Activated CD8-positive, alpha-beta T cell treated with anti-CD3 and anti-CD28 coated beads for 36 hours (primary cell): ENCODE measurements at regions of chr7 and their contacts with region 1.

Region 1: DNA sequence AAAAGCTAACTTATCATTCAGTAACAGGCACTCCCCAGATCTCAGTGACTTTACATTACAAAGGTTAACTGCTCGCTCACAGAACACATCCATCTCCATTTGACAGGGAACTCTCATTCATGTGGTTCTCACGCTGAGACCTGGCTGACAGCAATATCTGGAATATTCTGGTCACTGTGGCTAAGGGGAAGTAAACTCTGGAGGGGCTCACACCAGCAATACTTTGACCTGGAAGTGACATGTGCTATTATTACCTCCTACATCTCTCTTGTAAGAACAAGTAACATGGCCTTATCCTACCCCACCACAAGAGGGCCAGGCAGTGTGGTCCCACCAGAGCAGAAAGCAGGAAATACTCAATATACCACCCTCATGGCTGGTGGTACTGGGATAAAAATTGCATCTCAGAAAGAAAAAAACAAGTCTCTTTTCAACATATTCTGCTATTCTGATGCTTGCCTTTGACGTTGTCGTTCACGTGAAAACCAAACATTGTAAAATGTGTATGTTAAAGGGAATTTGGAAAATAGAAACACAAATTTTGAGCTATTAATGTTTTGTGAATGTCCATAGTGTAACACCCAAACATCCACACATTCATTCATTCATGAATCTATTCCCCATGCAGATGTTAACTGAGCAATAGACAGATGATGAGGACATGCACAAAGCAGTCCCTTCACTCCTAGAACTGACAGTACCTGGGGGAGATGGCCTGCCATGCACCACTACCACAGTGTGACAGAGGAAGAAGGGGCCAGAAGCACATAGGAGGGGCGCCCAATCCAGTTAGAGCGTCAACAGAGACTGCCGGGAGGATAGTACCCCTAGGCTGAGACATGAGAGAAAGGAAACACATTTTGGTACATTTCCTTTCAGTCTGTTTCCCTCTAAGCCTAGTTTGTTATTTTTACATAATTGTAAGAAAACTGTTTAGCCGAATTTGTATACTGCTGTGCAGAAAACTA is 166.0 kb upstream of the SP4 start:
- DNase-seq: peak; percentile 80
- ATAC-seq: peak; percentile 97
- H3K4me3 Mint-ChIP-seq: no peak overlapping the region
- H3K27ac Mint-ChIP-seq: peak overlapping the region; percentile 52
- H3K4me1 Mint-ChIP-seq: peaks cover 16% of the 10 kb centered on the region
- H3K27me3 Mint-ChIP-seq: peaks cover 3% of the 10 kb centered on the region
- CTCF ChIP-seq: peak; percentile 70

Region 2: GRCh38 chr7:21192657-21193056 is 69.3 kb before region 1 on chr7:
- CTCF ChIA-PET with region 1: no interaction called
- POLR2A ChIA-PET with region 1: no interaction called
- intact Hi-C with region 1: no loop called
- DNase-seq: no peak
- ATAC-seq: no peak
- H3K4me3 Mint-ChIP-seq: no peak overlapping the region
- H3K27ac Mint-ChIP-seq: no peak overlapping the region
- H3K4me1 Mint-ChIP-seq: peaks cover 4% of the 10 kb centered on the region
- H3K27me3 Mint-ChIP-seq: no peaks in the 10 kb centered on the region
- CTCF ChIP-seq: no peak

Region 3: GRCh38 chr7:21276471-21277035 is 14.6 kb after region 1 on chr7:
- CTCF ChIA-PET with region 1: interaction called, 16 read pairs
- POLR2A ChIA-PET with region 1: interaction called, 3 read pairs
- intact Hi-C with region 1: no loop called
- DNase-seq: no peak
- ATAC-seq: no peak
- H3K4me3 Mint-ChIP-seq: no peak overlapping the region
- H3K27ac Mint-ChIP-seq: no peak overlapping the region
- H3K4me1 Mint-ChIP-seq: peaks cover 5% of the 10 kb centered on the region
- H3K27me3 Mint-ChIP-seq: no peaks in the 10 kb centered on the region
- CTCF ChIP-seq: no peak

Region 4: GRCh38 chr7:21338728-21339164 is 76.8 kb after region 1 on chr7:
- CTCF ChIA-PET with region 1: no interaction called
- POLR2A ChIA-PET with region 1: no interaction called
- intact Hi-C with region 1: no loop called
- DNase-seq: peak; percentile 86
- ATAC-seq: peak; percentile 93
- H3K4me3 Mint-ChIP-seq: peak overlapping the region; percentile 22
- H3K27ac Mint-ChIP-seq: peak overlapping the region; percentile 95
- H3K4me1 Mint-ChIP-seq: peaks cover 47% of the 10 kb centered on the region
- H3K27me3 Mint-ChIP-seq: no peaks in the 10 kb centered on the region
- CTCF ChIP-seq: no peak

Region 5: DNA sequence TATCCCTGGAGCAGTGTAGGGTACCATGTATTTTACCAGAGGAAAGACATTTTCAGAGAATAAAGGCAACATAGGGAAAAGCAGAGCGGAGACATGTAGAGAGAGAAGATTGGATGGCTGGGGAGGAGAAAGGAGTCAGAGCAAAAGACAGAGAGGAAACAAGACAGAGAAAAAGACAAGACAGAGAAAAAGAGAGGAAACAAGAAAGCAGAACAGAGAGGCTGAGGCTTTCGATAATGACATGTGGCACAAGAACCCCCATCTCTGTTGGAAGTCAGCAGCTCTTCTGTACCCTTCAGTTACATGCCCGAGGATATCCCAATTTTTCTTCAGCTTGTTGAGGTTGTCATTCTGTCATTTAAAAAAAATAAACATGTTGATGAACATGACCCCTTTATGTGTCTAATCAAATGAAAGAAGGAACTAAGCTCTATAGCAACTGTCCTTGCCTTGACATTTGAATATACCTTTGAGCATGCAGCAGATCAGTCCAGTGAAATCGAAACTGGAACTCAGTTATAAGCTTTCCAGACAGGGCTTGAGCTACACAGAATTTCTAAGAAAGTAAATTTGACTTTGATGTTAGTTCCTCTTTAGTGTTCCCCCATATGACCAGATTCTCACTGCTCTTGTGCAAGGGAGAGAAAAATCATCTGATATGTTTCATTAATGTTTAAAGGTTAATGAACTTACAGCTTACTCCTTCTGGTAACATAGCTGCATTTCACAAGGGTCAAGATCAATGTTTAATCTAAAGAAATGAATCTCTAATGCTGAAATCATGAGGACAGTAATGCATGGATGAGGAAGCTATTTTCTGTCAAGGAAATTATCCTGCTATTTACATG is 90.9 kb after region 1 on chr7:
- CTCF ChIA-PET with region 1: interaction called, 4 read pairs
- POLR2A ChIA-PET with region 1: no interaction called
- intact Hi-C with region 1: loop called (anchors 5 kb)
- DNase-seq: peak; percentile 39
- ATAC-seq: peak; percentile 80
- H3K4me3 Mint-ChIP-seq: peak overlapping the region; percentile 62
- H3K27ac Mint-ChIP-seq: peak overlapping the region; percentile 94
- H3K4me1 Mint-ChIP-seq: peaks cover 55% of the 10 kb centered on the region
- H3K27me3 Mint-ChIP-seq: no peaks in the 10 kb centered on the region
- CTCF ChIP-seq: no peak

Region 6: DNA sequence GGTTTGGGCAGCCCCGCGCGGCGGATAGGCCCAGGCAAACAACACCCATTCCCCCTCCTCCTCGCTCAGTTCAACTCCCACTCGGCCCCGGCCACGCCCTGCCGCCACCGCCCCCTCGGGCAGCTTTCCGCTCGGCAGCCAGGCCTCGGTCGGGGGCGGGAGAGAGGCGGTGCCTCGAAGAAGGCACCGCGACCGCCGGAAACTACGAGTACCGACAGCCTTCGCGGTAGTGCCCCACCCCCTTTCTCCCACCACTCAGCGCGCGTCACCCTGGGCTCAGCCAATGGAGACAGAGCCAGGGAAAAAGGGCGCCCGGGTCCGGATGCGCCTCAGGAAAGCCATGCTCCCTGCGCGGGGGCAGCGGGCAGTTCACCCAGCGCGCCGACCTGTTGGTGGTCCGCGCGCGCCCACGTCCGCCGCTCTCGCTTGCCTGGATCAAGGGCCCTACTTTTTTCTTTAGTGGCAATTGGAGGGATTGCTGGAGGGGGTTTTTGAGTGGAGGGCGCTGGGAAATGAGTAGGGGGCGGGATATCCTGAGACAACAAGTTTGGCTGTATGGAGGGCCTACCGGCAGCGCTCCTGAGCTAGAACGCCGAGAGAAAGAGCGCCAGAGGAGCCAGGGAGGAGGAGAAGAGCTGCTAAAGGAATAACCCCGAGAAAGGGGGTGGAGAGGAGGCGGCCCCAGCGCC is 165.4 kb after region 1 on chr7:
- CTCF ChIA-PET with region 1: interaction called, 14 read pairs
- POLR2A ChIA-PET with region 1: interaction called, 3 read pairs
- intact Hi-C with region 1: loop called (anchors 10 kb)
- DNase-seq: peak; percentile 99
- ATAC-seq: peak; percentile 81
- H3K4me3 Mint-ChIP-seq: peak overlapping the region; percentile 99
- H3K27ac Mint-ChIP-seq: peak overlapping the region; percentile 98
- H3K4me1 Mint-ChIP-seq: peaks cover 34% of the 10 kb centered on the region
- H3K27me3 Mint-ChIP-seq: no peaks in the 10 kb centered on the region
- CTCF ChIP-seq: no peak

Region 7: DNA sequence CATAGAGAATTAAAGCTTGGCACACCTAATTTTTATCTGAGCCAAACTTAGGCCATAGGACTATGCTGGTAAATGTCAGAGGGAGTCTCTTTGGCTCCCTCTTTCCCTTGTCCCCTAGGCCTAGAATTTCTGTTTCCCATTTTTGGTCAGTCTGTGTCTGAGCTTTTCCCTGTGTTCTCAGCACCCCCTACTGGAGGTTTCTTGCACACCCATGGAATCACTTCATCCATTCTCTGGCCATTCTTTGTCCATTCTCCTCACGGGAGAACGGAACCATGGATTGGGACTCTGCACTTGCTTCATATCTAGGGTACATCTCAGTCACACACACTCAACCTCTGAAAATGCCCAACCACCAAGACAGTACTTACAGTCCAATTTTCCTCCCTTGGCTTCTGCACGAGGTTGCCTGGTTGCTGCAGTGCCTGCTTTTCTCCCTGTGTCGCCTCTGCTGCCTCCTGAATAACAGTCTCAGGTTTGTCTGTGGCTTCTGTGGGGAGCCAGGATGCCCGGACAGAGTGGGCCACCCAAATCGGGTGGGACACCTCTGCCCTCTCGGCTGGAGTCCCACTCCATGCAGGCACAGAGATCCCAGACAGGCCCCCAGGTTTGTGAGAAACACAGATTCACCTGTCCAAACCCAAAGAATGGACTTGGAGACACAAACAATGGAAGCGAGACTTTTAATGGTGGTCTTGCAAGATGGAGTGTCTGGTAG is 245.9 kb after region 1 on chr7:
- CTCF ChIA-PET with region 1: interaction called, 14 read pairs
- POLR2A ChIA-PET with region 1: no interaction called
- intact Hi-C with region 1: no loop called
- DNase-seq: peak; percentile 51
- ATAC-seq: no peak
- H3K4me3 Mint-ChIP-seq: no peak overlapping the region
- H3K27ac Mint-ChIP-seq: no peak overlapping the region
- H3K4me1 Mint-ChIP-seq: peaks cover 2% of the 10 kb centered on the region
- H3K27me3 Mint-ChIP-seq: no peaks in the 10 kb centered on the region
- CTCF ChIP-seq: peak; percentile 67